ENCODE measurements at regions of chr14 and their contacts with region 1.

Region 1: DNA sequence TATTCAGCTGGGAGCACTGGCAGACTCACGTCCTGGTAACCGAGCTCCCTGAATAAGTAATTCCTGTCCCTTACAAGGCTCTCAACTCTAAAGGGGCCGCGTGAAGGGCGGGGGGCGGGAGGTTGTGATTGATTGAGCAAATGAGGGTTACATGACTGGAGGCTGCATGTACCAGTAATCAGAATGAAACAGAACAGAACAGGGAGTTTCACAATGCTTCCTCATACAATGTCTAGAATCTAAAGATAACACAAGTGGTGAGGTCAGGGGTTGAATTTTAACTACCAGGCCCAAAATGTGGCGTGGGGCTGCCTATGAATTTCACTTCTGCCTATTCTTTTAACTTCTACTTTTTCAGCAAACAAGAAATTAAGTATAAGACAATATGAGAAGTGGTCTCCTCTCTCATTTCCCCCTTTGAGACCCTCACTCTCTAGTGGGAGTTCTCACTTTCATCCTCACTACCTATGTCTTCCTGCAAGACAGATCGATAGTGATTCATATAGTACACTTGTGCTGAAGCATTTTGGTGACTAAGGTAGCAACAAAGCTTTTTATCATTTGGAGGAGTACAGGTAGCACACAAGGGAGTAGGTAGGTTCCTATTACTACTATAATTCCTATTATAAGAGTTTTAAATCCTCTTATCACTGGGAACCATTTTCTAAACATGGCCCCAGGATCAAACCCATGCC is 239.8 kb downstream of the KTN1 start:
- DNase-seq: peak; percentile 40
- ATAC-seq: peak; percentile 93
- H3K4me3 ChIP-seq: no peak overlapping the region
- H3K27ac ChIP-seq: no peak overlapping the region
- H3K4me1 ChIP-seq: no peaks in the 10 kb centered on the region; the same call in 1 of the 2 replicates
- H3K27me3 ChIP-seq: no peaks in the 10 kb centered on the region
- CTCF ChIP-seq: no peak
- EP300 ChIP-seq: peak; percentile 33 to 45; a peak in 1 of 4 replicates
- POLR2A ChIP-seq: no peak
- RAD21 ChIP-seq: no peak

Region 2: DNA sequence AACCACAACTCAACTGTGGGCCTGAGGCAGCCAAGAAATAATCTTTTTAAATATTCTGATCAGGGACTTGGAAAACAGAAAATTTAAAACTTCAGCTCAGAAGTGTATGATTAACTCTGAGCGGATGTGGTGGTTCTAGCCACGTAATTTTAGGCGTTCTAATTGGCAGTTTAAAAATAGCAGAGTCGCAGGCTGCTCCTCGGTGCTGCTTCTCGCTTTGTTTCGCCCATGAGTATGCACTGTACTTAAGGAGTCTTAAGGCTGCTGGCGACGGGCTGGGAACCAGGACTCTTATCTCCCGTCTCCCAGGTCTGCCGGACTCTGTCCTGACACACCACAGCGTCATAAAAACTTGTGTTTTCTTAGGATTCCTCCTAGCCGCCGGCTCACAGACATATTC is 185.0 kb after region 1 on chr14:
- CTCF ChIA-PET with region 1: no interaction called
- POLR2A ChIA-PET with region 1: no interaction called
- RAD21 ChIA-PET with region 1: no interaction called
- SMC1A ChIA-PET with region 1: no interaction called
- in situ Hi-C with region 1: no loop called
- intact Hi-C with region 1: loop called (anchors 10 kb)
- DNase-seq: peak; percentile 15
- ATAC-seq: peak; percentile 86
- H3K4me3 ChIP-seq: no peak overlapping the region
- H3K27ac ChIP-seq: no peak overlapping the region
- H3K4me1 ChIP-seq: no peaks in the 10 kb centered on the region; the same call in 1 of the 2 replicates
- H3K27me3 ChIP-seq: no peaks in the 10 kb centered on the region
- CTCF ChIP-seq: no peak
- EP300 ChIP-seq: peak in 1 of 2 experiments; percentile 23; a peak in 1 of 4 replicates
- POLR2A ChIP-seq: no peak
- RAD21 ChIP-seq: no peak

Measured in GM12878 (cell line).